Activated CD4-positive, alpha-beta memory T cell treated with anti-CD3 and anti-CD28 coated beads for 36 hours (primary cell): ENCODE measurements at regions of chr13 and their contacts with region 1.

Region 1: GRCh38 chr13:98875146-98875729 is 102.6 kb downstream of the DOCK9 start:
- DNase-seq: no peak
- H3K4me3 Mint-ChIP-seq: no peak overlapping the region
- H3K27ac Mint-ChIP-seq: peak overlapping the region; percentile 20
- H3K4me1 Mint-ChIP-seq: peaks cover 22% of the 10 kb centered on the region
- H3K27me3 Mint-ChIP-seq: no peaks in the 10 kb centered on the region

Region 2: DNA sequence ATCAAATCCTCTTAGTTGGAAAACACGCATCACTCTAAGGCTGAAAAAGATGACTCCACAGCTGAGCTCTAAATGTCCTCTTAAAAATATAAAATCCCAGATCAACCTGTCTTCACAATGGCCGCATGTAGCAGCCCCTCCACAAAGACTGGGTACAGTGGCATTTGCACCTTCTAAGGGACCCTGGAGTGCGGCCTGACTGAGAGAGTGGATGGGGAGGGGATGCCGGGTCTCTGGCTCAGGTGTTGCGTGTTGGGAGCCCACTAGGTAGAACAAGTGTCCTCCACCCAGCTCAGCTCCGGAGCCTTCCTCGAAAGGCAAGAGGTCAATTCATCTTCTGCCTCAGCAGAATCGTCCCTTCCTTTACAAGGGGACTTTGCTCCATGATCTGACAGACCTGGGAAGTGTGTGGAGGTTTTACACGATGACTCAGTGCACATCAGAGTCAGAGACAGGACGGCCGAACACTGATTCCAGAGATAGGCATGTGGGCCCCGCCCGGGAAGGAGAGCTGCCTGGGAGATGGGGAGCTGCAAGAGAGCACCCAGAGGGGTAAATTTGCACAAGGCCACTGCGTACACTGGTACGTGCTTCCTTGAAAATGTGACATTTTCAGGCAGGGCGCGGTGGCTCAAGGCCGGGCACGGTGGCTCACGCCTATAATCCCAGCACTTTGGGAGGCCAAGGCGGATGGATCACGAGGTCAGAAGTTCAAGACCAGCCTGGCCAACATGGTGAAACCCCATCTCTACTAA is 99.2 kb before region 1 on chr13:
- CTCF ChIA-PET with region 1: no interaction called
- POLR2A ChIA-PET with region 1: no interaction called
- intact Hi-C with region 1: no loop called
- DNase-seq: no peak
- H3K4me3 Mint-ChIP-seq: no peak overlapping the region
- H3K27ac Mint-ChIP-seq: no peak overlapping the region
- H3K4me1 Mint-ChIP-seq: no peaks in the 10 kb centered on the region
- H3K27me3 Mint-ChIP-seq: peaks cover 12% of the 10 kb centered on the region

Region 3: GRCh38 chr13:98821372-98822224 is 53.6 kb before region 1 on chr13:
- CTCF ChIA-PET with region 1: no interaction called
- POLR2A ChIA-PET with region 1: no interaction called
- intact Hi-C with region 1: no loop called
- DNase-seq: no peak
- H3K4me3 Mint-ChIP-seq: no peak overlapping the region
- H3K27ac Mint-ChIP-seq: no peak overlapping the region
- H3K4me1 Mint-ChIP-seq: peaks cover 4% of the 10 kb centered on the region
- H3K27me3 Mint-ChIP-seq: no peaks in the 10 kb centered on the region

Region 4: DNA sequence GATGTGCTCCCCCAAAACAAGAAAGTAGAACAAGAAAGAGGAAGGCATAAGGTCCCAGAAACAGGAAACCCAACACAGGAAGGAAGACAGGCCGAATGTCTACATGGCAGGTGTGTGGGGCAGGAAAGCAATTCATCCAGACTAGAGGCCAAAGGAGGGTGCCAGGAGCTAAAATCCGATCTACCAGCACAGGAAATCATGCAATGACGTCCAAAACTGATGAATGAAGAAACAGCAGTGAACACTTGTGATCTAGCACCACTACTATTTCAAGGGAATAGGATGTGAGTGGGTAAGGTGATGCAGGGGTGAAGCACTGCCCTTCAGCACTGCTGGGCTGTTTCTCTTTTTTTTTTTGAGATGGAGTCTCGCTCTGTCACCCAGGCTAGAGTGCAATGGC is 43.5 kb after region 1 on chr13:
- CTCF ChIA-PET with region 1: interaction called, 3 read pairs
- POLR2A ChIA-PET with region 1: no interaction called
- intact Hi-C with region 1: loop called (anchors 2 kb)
- DNase-seq: peak; percentile 32
- H3K4me3 Mint-ChIP-seq: no peak overlapping the region
- H3K27ac Mint-ChIP-seq: peak overlapping the region; percentile 71
- H3K4me1 Mint-ChIP-seq: peaks cover 36% of the 10 kb centered on the region
- H3K27me3 Mint-ChIP-seq: no peaks in the 10 kb centered on the region

Region 5: DNA sequence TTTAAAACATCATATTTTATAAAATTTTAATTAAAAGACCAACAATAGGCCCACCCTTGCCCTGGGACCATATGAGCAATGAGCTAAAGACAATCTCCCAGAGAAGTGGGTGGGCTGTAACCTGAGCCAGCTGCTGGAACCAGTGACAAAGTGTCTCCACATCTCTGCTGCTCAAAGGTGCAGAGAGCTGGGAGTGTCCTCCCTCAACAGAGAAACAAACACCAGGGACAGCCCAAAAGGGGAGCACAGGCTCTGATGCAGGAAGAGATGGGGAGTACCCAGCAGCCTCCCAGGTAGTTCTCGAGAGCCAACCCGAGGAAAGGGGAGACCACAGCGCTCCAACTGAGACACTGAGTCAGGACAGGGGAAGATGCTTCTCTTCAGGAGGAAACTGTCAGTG is 63.6 kb after region 1 on chr13:
- CTCF ChIA-PET with region 1: no interaction called
- POLR2A ChIA-PET with region 1: no interaction called
- intact Hi-C with region 1: no loop called
- DNase-seq: no peak
- H3K4me3 Mint-ChIP-seq: no peak overlapping the region
- H3K27ac Mint-ChIP-seq: no peak overlapping the region
- H3K4me1 Mint-ChIP-seq: peaks cover 4% of the 10 kb centered on the region
- H3K27me3 Mint-ChIP-seq: no peaks in the 10 kb centered on the region